ENCODE measurements at regions of chr12 and their contacts with region 1.

Region 1: DNA sequence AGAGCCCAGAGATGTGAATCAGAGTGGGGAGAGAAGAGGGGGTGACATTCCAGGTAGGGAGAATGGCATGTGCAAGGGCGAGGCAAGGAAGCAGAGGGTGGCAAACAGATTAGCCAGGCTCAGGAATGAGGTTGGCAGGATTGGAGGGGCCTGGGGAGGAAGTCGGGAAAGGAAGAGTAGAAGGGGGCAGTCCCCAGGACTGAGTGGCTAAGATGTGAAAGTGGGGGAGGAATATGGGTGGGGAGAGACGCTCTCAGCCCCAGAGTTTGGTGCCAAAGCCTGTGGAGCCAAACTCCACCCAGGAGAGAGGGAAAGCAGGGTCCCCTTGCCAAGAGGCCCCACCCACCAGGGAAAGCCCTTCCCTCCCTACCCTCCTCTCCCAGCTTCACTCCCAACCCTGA is 5.5 kb upstream of the HDAC7 start:
- DNase-seq: peak in 1 of 2 donors; percentile 84
- H3K4me3 ChIP-seq: peak overlapping the region in 1 of 2 donors; percentile 30
- H3K27ac ChIP-seq: peak overlapping the region; percentile 97
- H3K4me1 ChIP-seq: peaks cover 35 to 81% of the 10 kb centered on the region in 2 donors
- H3K27me3 ChIP-seq: no peaks in the 10 kb centered on the region
- CTCF ChIP-seq: no peak

Region 2: DNA sequence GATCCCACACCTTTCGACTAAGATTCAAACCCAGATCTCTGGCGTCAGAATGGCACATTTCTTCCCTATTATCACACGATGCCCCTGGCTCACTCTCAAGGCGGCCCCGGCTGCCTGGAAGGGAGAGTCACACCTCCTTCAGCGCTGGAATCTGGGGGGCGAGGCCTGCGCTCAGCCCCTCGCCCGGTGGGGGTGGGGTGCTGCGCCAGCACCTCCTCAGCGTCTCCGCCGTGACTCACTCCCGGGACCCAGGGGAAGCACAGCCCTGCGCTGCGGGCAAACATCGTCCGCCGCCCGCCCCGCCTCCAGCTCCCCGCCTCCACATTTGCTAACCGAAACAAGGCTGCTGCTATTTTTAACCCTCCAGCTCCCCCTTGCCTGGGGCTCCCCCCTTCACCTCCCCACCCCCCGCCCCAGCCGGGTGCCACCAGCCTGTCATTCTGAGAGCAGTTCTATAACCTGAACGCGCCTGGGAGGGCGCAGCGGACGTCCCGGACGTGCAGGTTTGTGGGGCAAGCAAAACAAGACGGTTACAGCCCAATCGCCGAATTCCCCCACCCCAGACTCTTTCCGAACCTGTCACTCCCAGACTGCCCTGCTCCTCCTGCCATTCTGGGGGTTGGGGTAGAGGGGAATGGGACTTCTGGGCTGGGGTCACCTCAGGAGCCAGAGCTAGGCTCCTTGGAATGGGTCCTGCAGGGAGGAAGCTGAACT is 12.3 kb before region 1 on chr12:
- intact Hi-C with region 1: loop called (anchors 1 kb)
- DNase-seq: peak; percentile 86 to 98
- H3K4me3 ChIP-seq: peak overlapping the region; percentile 28 to 61
- H3K27ac ChIP-seq: peak overlapping the region; percentile 97
- H3K4me1 ChIP-seq: peaks cover 56 to 87% of the 10 kb centered on the region in 2 donors
- H3K27me3 ChIP-seq: no peaks in the 10 kb centered on the region
- CTCF ChIP-seq: peak in 1 of 3 experiments; percentile 6

Measured in ascending aorta (tissue), 2 donors.